CD8-positive, alpha-beta T cell (primary cell): ENCODE measurements at regions of chr12 and their contacts with region 1.

Region 1: GRCh38 chr12:52879394-52880351 is 25.2 kb downstream of the KRT8 start:
- DNase-seq: peak; percentile 53 to 82 (median 74)
- ATAC-seq: peak; percentile 98
- H3K4me3 ChIP-seq: peak overlapping the region; percentile 12 to 31
- H3K4me3 Mint-ChIP-seq: peak overlapping the region; percentile 69
- H3K27ac ChIP-seq: no peak overlapping the region
- H3K27ac Mint-ChIP-seq: no peak overlapping the region
- H3K4me1 ChIP-seq: peaks cover 11% of the 10 kb centered on the region
- H3K4me1 Mint-ChIP-seq: peaks cover 9% of the 10 kb centered on the region
- H3K27me3 ChIP-seq: peaks cover 0 to 2% of the 10 kb centered on the region in 2 experiments
- H3K27me3 Mint-ChIP-seq: peaks cover 7% of the 10 kb centered on the region
- CTCF ChIP-seq: peak; percentile 90

Region 2: GRCh38 chr12:52156736-52157565 is 722.7 kb before region 1 on chr12:
- CTCF ChIA-PET with region 1: interaction called, 8 read pairs
- POLR2A ChIA-PET with region 1: no interaction called
- intact Hi-C with region 1: loop called (anchors 5 kb)
- DNase-seq: peak; percentile 53 to 77 (median 73)
- ATAC-seq: peak; percentile 35
- H3K4me3 ChIP-seq: no peak overlapping the region
- H3K4me3 Mint-ChIP-seq: no peak overlapping the region
- H3K27ac ChIP-seq: no peak overlapping the region
- H3K27ac Mint-ChIP-seq: no peak overlapping the region
- H3K4me1 ChIP-seq: peaks cover 33% of the 10 kb centered on the region
- H3K4me1 Mint-ChIP-seq: peaks cover 22% of the 10 kb centered on the region
- H3K27me3 ChIP-seq: no peaks in the 10 kb centered on the region
- H3K27me3 Mint-ChIP-seq: no peaks in the 10 kb centered on the region
- CTCF ChIP-seq: peak; percentile 66

Region 3: GRCh38 chr12:52372216-52373154 is 507.2 kb before region 1 on chr12:
- CTCF ChIA-PET with region 1: interaction called, 78 read pairs
- POLR2A ChIA-PET with region 1: no interaction called
- intact Hi-C with region 1: loop called (anchors 1 kb)
- DNase-seq: peak; percentile 31 to 75 (median 60)
- ATAC-seq: no peak
- H3K4me3 ChIP-seq: no peak overlapping the region
- H3K4me3 Mint-ChIP-seq: no peak overlapping the region
- H3K27ac ChIP-seq: no peak overlapping the region
- H3K27ac Mint-ChIP-seq: no peak overlapping the region
- H3K4me1 ChIP-seq: no peaks in the 10 kb centered on the region
- H3K4me1 Mint-ChIP-seq: no peaks in the 10 kb centered on the region
- H3K27me3 ChIP-seq: peaks cover 0 to 2% of the 10 kb centered on the region in 2 experiments
- H3K27me3 Mint-ChIP-seq: peaks cover 21% of the 10 kb centered on the region
- CTCF ChIP-seq: peak; percentile 34

Region 4: GRCh38 chr12:52561880-52562449 is 317.7 kb before region 1 on chr12:
- CTCF ChIA-PET with region 1: interaction called, 23 read pairs
- POLR2A ChIA-PET with region 1: no interaction called
- intact Hi-C with region 1: no loop called
- DNase-seq: no peak
- ATAC-seq: no peak
- H3K4me3 ChIP-seq: no peak overlapping the region
- H3K4me3 Mint-ChIP-seq: no peak overlapping the region
- H3K27ac ChIP-seq: no peak overlapping the region
- H3K27ac Mint-ChIP-seq: no peak overlapping the region
- H3K4me1 ChIP-seq: peaks cover 5% of the 10 kb centered on the region
- H3K4me1 Mint-ChIP-seq: peaks cover 12% of the 10 kb centered on the region
- H3K27me3 ChIP-seq: no peaks in the 10 kb centered on the region
- H3K27me3 Mint-ChIP-seq: peaks cover 14% of the 10 kb centered on the region
- CTCF ChIP-seq: no peak

Region 5: DNA sequence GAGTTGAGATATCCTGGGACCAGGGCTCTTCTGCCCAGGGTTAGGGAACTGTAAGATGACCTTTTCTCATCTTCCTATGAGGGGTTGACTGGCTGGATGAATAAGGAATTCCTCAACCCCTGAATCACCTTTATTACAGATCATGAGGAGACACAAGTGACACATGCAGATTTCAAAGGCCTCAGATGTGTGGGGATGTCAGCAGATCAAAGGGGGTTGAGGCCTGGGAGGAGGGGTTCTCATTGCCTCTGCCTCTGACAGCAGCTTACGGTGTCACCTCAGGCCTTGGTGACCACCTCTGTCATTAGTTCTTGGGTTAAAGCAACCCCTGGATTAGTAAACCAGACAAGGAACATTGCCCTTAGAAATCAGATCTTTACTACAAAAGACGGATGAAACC is 276.4 kb before region 1 on chr12:
- CTCF ChIA-PET with region 1: interaction called, 20 read pairs
- POLR2A ChIA-PET with region 1: no interaction called
- intact Hi-C with region 1: no loop called
- DNase-seq: peak in 7 of 9 experiments; percentile 22 to 75 (median 55)
- ATAC-seq: peak; percentile 92
- H3K4me3 ChIP-seq: no peak overlapping the region
- H3K4me3 Mint-ChIP-seq: no peak overlapping the region
- H3K27ac ChIP-seq: no peak overlapping the region
- H3K27ac Mint-ChIP-seq: peak overlapping the region; percentile 70
- H3K4me1 ChIP-seq: peaks cover 65% of the 10 kb centered on the region
- H3K4me1 Mint-ChIP-seq: peaks cover 64% of the 10 kb centered on the region
- H3K27me3 ChIP-seq: no peaks in the 10 kb centered on the region
- H3K27me3 Mint-ChIP-seq: peaks cover 13% of the 10 kb centered on the region
- CTCF ChIP-seq: no peak

Region 6: GRCh38 chr12:52615208-52615868 is 264.3 kb before region 1 on chr12:
- CTCF ChIA-PET with region 1: interaction called, 20 read pairs
- POLR2A ChIA-PET with region 1: no interaction called
- intact Hi-C with region 1: no loop called
- DNase-seq: peak in 3 of 9 experiments; percentile 35 to 61 (median 48)
- ATAC-seq: peak; percentile 45
- H3K4me3 ChIP-seq: no peak overlapping the region
- H3K4me3 Mint-ChIP-seq: peak overlapping the region; percentile 53
- H3K27ac ChIP-seq: peak overlapping the region; percentile 58 to 60
- H3K27ac Mint-ChIP-seq: peak overlapping the region; percentile 95
- H3K4me1 ChIP-seq: peaks cover 88% of the 10 kb centered on the region
- H3K4me1 Mint-ChIP-seq: peaks cover 82% of the 10 kb centered on the region
- H3K27me3 ChIP-seq: no peaks in the 10 kb centered on the region
- H3K27me3 Mint-ChIP-seq: no peaks in the 10 kb centered on the region
- CTCF ChIP-seq: no peak

Region 7: DNA sequence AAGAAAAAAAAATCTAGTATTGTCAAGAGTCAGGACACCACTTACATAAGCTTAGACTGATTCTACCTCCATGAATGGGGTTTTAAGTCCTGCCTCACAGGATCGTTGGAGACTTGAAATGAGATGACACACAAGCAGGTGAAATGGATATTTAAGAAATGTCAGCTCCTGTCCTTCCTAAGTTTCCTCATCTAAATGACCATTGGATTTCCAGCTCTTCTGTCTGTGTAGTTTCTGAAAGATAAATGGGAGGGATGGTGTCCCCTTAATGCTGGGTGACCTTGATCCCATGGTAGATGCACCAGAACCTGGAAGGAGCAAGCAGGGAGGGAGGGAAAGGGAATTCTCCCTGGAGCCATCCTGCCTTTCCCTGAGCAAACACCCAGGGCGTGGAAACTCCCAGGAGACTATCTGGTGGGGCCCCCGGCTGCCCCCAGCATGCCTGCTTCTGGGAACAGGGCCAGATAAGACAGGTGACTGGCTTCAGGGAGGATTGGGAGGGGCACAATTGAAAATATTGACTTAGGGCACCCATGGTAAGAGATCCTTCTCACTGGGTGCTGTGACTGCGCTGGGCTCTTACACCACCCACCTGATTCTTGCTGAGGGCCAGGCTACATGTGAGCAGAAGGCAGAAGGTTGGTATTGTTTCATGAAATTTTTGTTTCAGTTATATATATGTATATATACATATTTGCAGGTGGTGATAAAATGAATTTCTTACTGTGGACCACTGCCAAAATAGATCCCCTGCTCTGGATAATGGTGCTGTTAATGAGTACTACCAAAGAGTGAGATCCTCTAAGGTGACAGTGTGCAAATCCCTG is 15.6 kb after region 1 on chr12:
- CTCF ChIA-PET with region 1: interaction called, 73 read pairs
- POLR2A ChIA-PET with region 1: no interaction called
- intact Hi-C with region 1: no loop called
- DNase-seq: no peak
- ATAC-seq: no peak
- H3K4me3 ChIP-seq: no peak overlapping the region
- H3K4me3 Mint-ChIP-seq: no peak overlapping the region
- H3K27ac ChIP-seq: no peak overlapping the region
- H3K27ac Mint-ChIP-seq: no peak overlapping the region
- H3K4me1 ChIP-seq: no peaks in the 10 kb centered on the region
- H3K4me1 Mint-ChIP-seq: no peaks in the 10 kb centered on the region
- H3K27me3 ChIP-seq: peaks cover 0 to 2% of the 10 kb centered on the region in 2 experiments
- H3K27me3 Mint-ChIP-seq: peaks cover 5% of the 10 kb centered on the region
- CTCF ChIP-seq: no peak